B cell (primary cell): ENCODE measurements at regions of chr20 and their contacts with region 1.

Region 1: DNA sequence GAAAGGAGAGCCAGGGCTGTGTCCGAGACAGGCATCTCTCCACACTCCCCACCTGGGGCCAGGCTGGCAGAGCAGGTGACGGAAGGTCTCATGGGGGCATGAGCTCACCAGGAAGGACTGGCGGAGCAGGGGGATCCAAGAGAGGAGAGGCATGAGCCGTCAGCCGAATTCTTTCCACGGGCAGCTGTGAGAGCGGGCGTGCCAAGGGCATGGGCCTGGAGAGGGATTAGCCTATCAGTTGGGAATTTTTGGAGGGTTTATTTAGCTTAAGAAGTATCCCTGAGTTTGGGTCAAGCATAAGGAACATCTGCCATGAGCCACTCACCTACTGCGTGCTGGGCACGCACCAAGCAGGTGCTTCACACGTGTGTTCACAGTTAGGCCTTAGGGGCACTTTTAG is 60.2 kb upstream of the ZNFX1 start:
- DNase-seq: no peak
- ATAC-seq: no peak
- H3K4me3 ChIP-seq: no peak overlapping the region
- H3K4me3 Mint-ChIP-seq: no peak overlapping the region
- H3K27ac ChIP-seq: no peak overlapping the region
- H3K27ac Mint-ChIP-seq: no peak overlapping the region
- H3K4me1 ChIP-seq: no peaks in the 10 kb centered on the region
- H3K4me1 Mint-ChIP-seq: no peaks in the 10 kb centered on the region
- H3K27me3 ChIP-seq: peaks cover 0 to 8% (median 1%) of the 10 kb centered on the region in 4 experiments
- H3K27me3 Mint-ChIP-seq: peaks cover 17% of the 10 kb centered on the region
- CTCF ChIP-seq: no peak

Region 2: GRCh38 chr20:49484180-49485140 is 146.4 kb after region 1 on chr20:
- CTCF ChIA-PET with region 1: interaction called, 11 read pairs
- POLR2A ChIA-PET with region 1: no interaction called
- intact Hi-C with region 1: no loop called
- DNase-seq: peak; percentile 51
- ATAC-seq: no peak
- H3K4me3 ChIP-seq: peak overlapping the region in 3 of 5 experiments; percentile 17 to 55 (median 19)
- H3K4me3 Mint-ChIP-seq: peak overlapping the region; percentile 85
- H3K27ac ChIP-seq: no peak overlapping the region
- H3K27ac Mint-ChIP-seq: no peak overlapping the region
- H3K4me1 ChIP-seq: peaks cover 9 to 10% of the 10 kb centered on the region in 2 donors
- H3K4me1 Mint-ChIP-seq: peaks cover 6% of the 10 kb centered on the region
- H3K27me3 ChIP-seq: peaks cover 0 to 66% (median 35%) of the 10 kb centered on the region in 4 experiments
- H3K27me3 Mint-ChIP-seq: peaks cover 75% of the 10 kb centered on the region
- CTCF ChIP-seq: peak; percentile 52

Region 3: GRCh38 chr20:49508435-49509199 is 170.6 kb after region 1 on chr20:
- CTCF ChIA-PET with region 1: interaction called, 13 read pairs
- POLR2A ChIA-PET with region 1: no interaction called
- intact Hi-C with region 1: no loop called
- DNase-seq: peak; percentile 36
- ATAC-seq: no peak
- H3K4me3 ChIP-seq: no peak overlapping the region
- H3K4me3 Mint-ChIP-seq: no peak overlapping the region
- H3K27ac ChIP-seq: no peak overlapping the region
- H3K27ac Mint-ChIP-seq: no peak overlapping the region
- H3K4me1 ChIP-seq: no peaks in the 10 kb centered on the region
- H3K4me1 Mint-ChIP-seq: peaks cover 3% of the 10 kb centered on the region
- H3K27me3 ChIP-seq: peaks cover 0 to 22% (median 1%) of the 10 kb centered on the region in 4 experiments
- H3K27me3 Mint-ChIP-seq: peaks cover 47% of the 10 kb centered on the region
- CTCF ChIP-seq: peak; percentile 32

Region 4: DNA sequence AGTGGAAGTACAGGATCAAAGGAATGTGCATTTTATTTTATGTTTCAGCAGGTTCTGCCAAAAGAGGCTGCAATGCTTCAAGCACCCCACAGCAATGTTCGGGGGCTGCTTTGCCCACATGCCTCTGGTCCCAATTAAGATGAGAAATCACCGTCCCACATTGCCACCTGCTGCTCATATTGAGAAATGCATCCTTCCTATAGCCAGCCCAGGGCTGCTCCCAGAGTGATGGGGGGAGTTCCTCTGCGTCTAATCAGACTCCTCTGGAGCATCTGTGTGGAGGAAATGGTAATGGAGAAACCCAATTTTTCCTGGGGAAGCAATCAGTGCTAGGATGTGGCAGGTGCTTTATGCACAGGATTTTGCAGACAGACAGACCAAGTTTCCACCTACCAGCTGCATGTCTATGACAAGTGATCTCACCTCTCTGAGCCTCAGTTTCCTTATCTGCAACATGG is 196.2 kb after region 1 on chr20:
- CTCF ChIA-PET with region 1: interaction called, 13 read pairs
- POLR2A ChIA-PET with region 1: no interaction called
- intact Hi-C with region 1: no loop called
- DNase-seq: peak; percentile 68
- ATAC-seq: peak; percentile 66
- H3K4me3 ChIP-seq: no peak overlapping the region
- H3K4me3 Mint-ChIP-seq: no peak overlapping the region
- H3K27ac ChIP-seq: no peak overlapping the region
- H3K27ac Mint-ChIP-seq: no peak overlapping the region
- H3K4me1 ChIP-seq: peaks cover 0 to 3% of the 10 kb centered on the region in 2 donors
- H3K4me1 Mint-ChIP-seq: peaks cover 4% of the 10 kb centered on the region
- H3K27me3 ChIP-seq: peaks cover 0 to 8% (median 2%) of the 10 kb centered on the region in 4 experiments
- H3K27me3 Mint-ChIP-seq: peaks cover 18% of the 10 kb centered on the region
- CTCF ChIP-seq: peak; percentile 88